Left colon (tissue), 2 donors: ENCODE measurements at regions of chr2 and their contacts with region 1.

Region 1: DNA sequence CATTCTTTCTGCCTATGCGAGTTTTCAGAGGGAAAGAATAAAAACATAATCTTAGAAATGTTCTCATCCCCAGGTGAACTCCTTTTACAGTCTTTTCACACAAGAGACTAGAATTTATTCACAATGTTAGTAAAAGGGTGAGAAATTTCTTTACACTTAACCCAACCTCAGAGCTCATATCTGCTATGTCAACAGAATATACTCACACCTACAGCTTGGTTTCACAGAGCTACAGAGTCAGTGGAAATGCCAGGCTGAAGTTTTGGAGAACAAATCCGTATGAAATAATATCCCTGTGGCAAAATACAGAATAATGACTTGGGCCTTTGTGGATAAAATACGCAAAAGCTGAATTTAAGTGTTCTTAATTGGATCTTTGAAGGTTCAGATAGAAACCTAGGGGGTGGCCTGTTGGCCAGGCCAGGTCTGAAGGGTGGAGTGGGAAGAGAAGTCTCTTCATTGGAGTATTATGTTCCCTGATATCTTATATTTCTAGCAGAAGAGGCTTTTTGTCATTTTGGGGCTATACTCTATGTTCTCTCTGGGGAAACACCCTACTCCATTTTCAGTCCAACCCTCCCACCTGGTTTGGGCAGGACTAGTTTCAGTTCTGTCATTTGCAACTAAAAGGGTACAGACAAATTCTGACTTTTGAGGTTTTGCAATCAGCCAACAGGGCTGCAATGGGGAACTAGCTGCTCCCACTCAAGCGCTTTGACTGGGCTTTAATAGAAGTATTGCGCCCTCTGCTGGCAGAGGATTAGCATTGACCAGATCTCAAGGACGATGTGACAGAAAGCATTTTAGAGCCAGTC is 25.7 kb downstream of the FBXO48 start:
- DNase-seq: peak; percentile 71 to 80
- ATAC-seq: peak; percentile 83

Region 2: DNA sequence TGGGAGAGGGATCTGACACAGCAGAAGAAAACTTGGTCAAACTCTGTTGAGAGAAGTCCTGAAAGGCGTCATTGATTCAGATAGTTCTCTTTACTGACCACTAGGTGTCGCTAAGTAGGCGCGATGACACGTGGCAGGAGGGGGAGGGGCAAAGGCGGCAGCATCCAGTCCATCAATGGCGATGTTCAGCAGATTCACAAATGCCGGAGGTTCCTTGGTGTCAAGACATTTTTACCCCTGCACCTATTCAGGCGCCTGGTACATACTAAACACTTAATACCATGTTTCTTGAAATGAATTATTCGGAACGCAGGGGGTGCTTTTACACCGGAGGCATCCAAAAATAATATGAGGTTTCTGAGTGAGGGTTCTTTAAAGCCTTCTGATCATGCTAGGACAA is 79.3 kb before region 1 on chr2:
- intact Hi-C with region 1: loop called in 1 of 2 experiments (anchors 5 kb)
- DNase-seq: peak; percentile 55 to 86
- ATAC-seq: peak; percentile 80

Region 3: GRCh38 chr2:68594674-68595492 is 153.5 kb after region 1 on chr2:
- intact Hi-C with region 1: no loop called
- DNase-seq: peak in 1 of 2 donors; percentile 47
- ATAC-seq: peak; percentile 49